WTC11 (cell line): ENCODE measurements at regions of chr12 and their contacts with region 1.

Region 1: GRCh38 chr12:13941258-13942249 is 39.8 kb downstream of the GRIN2B start:
- DNase-seq: peak; percentile 74
- ATAC-seq: peak; percentile 85
- H3K4me3 Mint-ChIP-seq: peak overlapping the region; percentile 38
- H3K27ac Mint-ChIP-seq: peak overlapping the region; percentile 38; the same call in 1 of the 2 replicates
- H3K4me1 Mint-ChIP-seq: peaks cover 30% of the 10 kb centered on the region
- H3K27me3 Mint-ChIP-seq: no peaks in the 10 kb centered on the region
- CTCF ChIP-seq: peak; percentile 27

Region 2: GRCh38 chr12:13278249-13278787 is 663.2 kb before region 1 on chr12:
- CTCF ChIA-PET with region 1: interaction called, 11 read pairs
- POLR2A ChIA-PET with region 1: interaction called, 3 read pairs
- DNase-seq: peak; percentile 83
- ATAC-seq: peak; percentile 90
- H3K4me3 Mint-ChIP-seq: peak overlapping the region; percentile 24; the same call in 1 of the 2 replicates
- H3K27ac Mint-ChIP-seq: no peak overlapping the region
- H3K4me1 Mint-ChIP-seq: peaks cover 28% of the 10 kb centered on the region
- H3K27me3 Mint-ChIP-seq: no peaks in the 10 kb centered on the region; the same call in none of the 2 replicates
- CTCF ChIP-seq: peak; percentile 99

Region 3: GRCh38 chr12:13631873-13632272 is 309.7 kb before region 1 on chr12:
- CTCF ChIA-PET with region 1: no interaction called
- POLR2A ChIA-PET with region 1: no interaction called
- DNase-seq: no peak
- ATAC-seq: no peak
- H3K4me3 Mint-ChIP-seq: no peak overlapping the region
- H3K27ac Mint-ChIP-seq: no peak overlapping the region
- H3K4me1 Mint-ChIP-seq: no peaks in the 10 kb centered on the region
- H3K27me3 Mint-ChIP-seq: no peaks in the 10 kb centered on the region
- CTCF ChIP-seq: no peak

Region 4: GRCh38 chr12:13740150-13740547 is 201.4 kb before region 1 on chr12:
- CTCF ChIA-PET with region 1: interaction called, 18 read pairs
- POLR2A ChIA-PET with region 1: no interaction called
- DNase-seq: no peak
- ATAC-seq: no peak
- H3K4me3 Mint-ChIP-seq: no peak overlapping the region
- H3K27ac Mint-ChIP-seq: no peak overlapping the region
- H3K4me1 Mint-ChIP-seq: peaks cover 8% of the 10 kb centered on the region
- H3K27me3 Mint-ChIP-seq: peaks cover 63% of the 10 kb centered on the region
- CTCF ChIP-seq: no peak

Region 5: GRCh38 chr12:13745111-13745685 is 196.4 kb before region 1 on chr12:
- CTCF ChIA-PET with region 1: interaction called, 18 read pairs
- POLR2A ChIA-PET with region 1: no interaction called
- DNase-seq: no peak
- ATAC-seq: no peak
- H3K4me3 Mint-ChIP-seq: no peak overlapping the region
- H3K27ac Mint-ChIP-seq: no peak overlapping the region
- H3K4me1 Mint-ChIP-seq: peaks cover 55% of the 10 kb centered on the region
- H3K27me3 Mint-ChIP-seq: peaks cover 88% of the 10 kb centered on the region
- CTCF ChIP-seq: no peak

Region 6: GRCh38 chr12:13843841-13844240 is 97.7 kb before region 1 on chr12:
- CTCF ChIA-PET with region 1: no interaction called
- POLR2A ChIA-PET with region 1: no interaction called
- DNase-seq: no peak
- ATAC-seq: no peak
- H3K4me3 Mint-ChIP-seq: no peak overlapping the region
- H3K27ac Mint-ChIP-seq: no peak overlapping the region
- H3K4me1 Mint-ChIP-seq: no peaks in the 10 kb centered on the region
- H3K27me3 Mint-ChIP-seq: peaks cover 5% of the 10 kb centered on the region; the same call in 1 of the 2 replicates
- CTCF ChIP-seq: no peak

Region 7: DNA sequence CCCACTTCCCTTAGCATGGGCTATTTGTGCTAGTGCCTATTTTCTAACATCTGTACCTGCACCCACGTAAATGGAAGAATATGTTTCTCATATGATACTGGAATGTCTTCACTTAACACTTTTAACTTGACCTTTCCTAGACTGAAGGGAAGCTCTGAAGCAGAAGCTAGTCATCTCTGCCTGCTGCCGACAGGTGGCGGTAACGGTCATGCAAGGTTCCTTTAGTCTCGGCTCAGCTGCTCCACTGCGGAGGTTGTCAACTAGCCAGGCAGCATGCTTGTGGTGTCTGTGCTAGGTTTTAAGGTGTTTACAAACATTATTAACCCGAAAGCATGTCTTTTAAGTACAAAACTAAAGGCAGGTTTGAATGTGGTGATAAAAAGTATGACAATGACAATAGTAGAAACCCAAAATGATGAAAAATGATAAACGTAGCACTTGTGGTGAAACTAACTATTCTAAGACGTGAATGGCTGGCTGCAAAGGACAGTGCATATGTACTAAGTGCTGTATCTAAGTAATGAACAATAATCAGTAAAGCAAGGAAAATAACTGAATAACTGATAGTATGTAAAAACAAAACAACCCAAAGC is 77.4 kb before region 1 on chr12:
- CTCF ChIA-PET with region 1: interaction called, 41 read pairs
- POLR2A ChIA-PET with region 1: no interaction called
- DNase-seq: peak; percentile 79
- ATAC-seq: peak; percentile 97
- H3K4me3 Mint-ChIP-seq: no peak overlapping the region
- H3K27ac Mint-ChIP-seq: no peak overlapping the region
- H3K4me1 Mint-ChIP-seq: peaks cover 9% of the 10 kb centered on the region
- H3K27me3 Mint-ChIP-seq: no peaks in the 10 kb centered on the region; the same call in 1 of the 2 replicates
- CTCF ChIP-seq: peak; percentile 72

Region 8: DNA sequence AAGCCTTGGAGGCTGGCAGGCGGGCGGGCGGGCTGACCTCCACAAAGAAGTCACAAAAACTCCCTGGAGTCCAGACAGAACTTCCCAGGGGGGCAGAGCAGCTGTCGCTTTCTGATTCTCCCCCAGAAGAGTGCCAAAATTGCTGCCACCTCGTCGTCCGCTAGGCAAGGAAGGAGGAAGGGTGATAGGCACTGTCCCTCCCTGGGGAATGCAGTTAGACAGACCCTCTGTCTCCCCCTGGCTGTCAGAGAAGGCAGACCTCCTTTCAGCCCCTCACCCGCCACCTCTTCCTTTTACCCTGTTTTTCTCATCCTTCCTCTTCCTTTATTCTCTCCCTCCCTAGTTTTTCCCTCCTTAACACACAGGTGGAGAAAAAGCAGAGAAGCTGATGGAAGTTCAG is 21.1 kb after region 1 on chr12:
- CTCF ChIA-PET with region 1: interaction called, 11 read pairs
- POLR2A ChIA-PET with region 1: interaction called, 3 read pairs
- DNase-seq: peak; percentile 58
- ATAC-seq: peak; percentile 81
- H3K4me3 Mint-ChIP-seq: no peak overlapping the region
- H3K27ac Mint-ChIP-seq: no peak overlapping the region
- H3K4me1 Mint-ChIP-seq: peaks cover 39% of the 10 kb centered on the region
- H3K27me3 Mint-ChIP-seq: no peaks in the 10 kb centered on the region; the same call in 1 of the 2 replicates
- CTCF ChIP-seq: peak; percentile 65

Region 9: GRCh38 chr12:13992106-13992505 is 50.6 kb after region 1 on chr12:
- CTCF ChIA-PET with region 1: no interaction called
- POLR2A ChIA-PET with region 1: no interaction called
- DNase-seq: no peak
- ATAC-seq: no peak
- H3K4me3 Mint-ChIP-seq: no peak overlapping the region
- H3K27ac Mint-ChIP-seq: no peak overlapping the region
- H3K4me1 Mint-ChIP-seq: peaks cover 4% of the 10 kb centered on the region; the same call in 1 of the 2 replicates
- H3K27me3 Mint-ChIP-seq: no peaks in the 10 kb centered on the region
- CTCF ChIP-seq: no peak

Region 10: DNA sequence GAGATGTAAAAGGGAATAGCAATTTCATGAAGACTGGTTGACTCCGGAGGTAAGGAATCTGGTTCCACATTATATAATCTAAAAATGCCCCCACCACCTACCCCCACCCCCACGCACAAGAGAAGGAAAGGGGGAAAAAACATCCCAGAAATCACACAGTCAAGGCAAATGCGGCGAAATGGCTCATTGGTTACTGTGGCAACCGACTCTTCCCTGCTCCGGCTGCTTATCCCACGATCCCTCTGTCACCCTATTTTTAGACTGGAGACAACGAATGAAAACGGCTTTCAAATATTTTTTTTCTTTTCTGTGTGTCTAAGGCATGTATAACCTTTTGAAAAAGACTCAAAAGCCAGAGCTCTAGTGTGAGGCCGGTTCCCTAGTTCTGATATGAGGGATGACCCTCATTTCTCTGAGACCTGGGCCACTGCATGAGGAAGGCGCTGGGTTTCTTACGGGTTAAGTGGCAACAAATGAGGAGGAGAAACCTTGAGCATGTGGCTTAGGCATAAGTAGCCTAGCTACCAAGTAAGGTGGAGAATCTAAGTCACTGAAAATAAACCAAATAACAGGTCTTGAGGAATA is 188.1 kb after region 1 on chr12:
- CTCF ChIA-PET with region 1: no interaction called
- POLR2A ChIA-PET with region 1: no interaction called
- DNase-seq: no peak
- ATAC-seq: no peak
- H3K4me3 Mint-ChIP-seq: no peak overlapping the region
- H3K27ac Mint-ChIP-seq: no peak overlapping the region
- H3K4me1 Mint-ChIP-seq: no peaks in the 10 kb centered on the region
- H3K27me3 Mint-ChIP-seq: peaks cover under 1% of the 10 kb centered on the region; the same call in 1 of the 2 replicates
- CTCF ChIP-seq: no peak